GM12878 (cell line): ENCODE measurements at regions of chr3 and their contacts with region 1.

Region 1: GRCh38 chr3:58217209-58217811 is 6.5 kb upstream of the DNASE1L3 start:
- DNase-seq: no peak
- ATAC-seq: peak; percentile 59
- H3K4me3 ChIP-seq: no peak overlapping the region
- H3K27ac ChIP-seq: no peak overlapping the region
- H3K4me1 ChIP-seq: peaks cover 56% of the 10 kb centered on the region
- H3K27me3 ChIP-seq: no peaks in the 10 kb centered on the region
- CTCF ChIP-seq: peak; percentile 84 to 94 (median 89)
- EP300 ChIP-seq: 0 out of 4 replicates have a peak, but pooled peaks of 1 of the 2 experiments have one; percentile 19
- POLR2A ChIP-seq: no peak
- RAD21 ChIP-seq: peak; percentile 74

Region 2: DNA sequence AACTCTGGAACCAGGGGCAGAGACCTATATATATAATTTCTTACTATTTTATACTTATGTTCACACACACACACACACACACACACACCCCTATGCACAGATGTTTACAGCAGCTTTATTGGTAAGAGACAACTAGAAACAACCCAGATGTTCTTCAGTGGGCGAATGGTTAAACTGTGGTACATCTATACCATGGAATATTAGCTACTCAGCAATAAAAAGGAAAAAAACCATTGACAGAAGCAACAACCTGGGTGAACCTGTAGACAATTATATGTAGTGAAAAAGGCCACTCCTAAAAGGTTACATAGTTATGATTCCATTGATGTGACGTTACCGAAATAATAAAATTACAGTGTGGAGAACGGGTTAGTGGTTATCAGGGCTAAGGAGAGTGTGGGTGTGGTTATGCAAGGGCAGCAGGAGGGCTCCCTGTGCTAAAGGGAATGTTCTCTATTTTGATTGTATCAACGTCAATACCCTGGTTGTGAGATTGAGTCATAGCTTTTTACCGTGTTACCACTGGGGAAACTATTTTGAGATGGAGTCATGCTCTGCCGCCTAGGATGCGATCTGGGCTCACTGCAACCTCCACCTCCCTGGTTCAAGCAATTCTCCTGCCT is 123.6 kb before region 1 on chr3:
- CTCF ChIA-PET with region 1: no interaction called
- POLR2A ChIA-PET with region 1: no interaction called
- RAD21 ChIA-PET with region 1: no interaction called
- SMC1A ChIA-PET with region 1: no interaction called
- in situ Hi-C with region 1: no loop called
- intact Hi-C with region 1: no loop called
- DNase-seq: no peak
- ATAC-seq: no peak
- H3K4me3 ChIP-seq: no peak overlapping the region
- H3K27ac ChIP-seq: no peak overlapping the region
- H3K4me1 ChIP-seq: no peaks in the 10 kb centered on the region
- H3K27me3 ChIP-seq: no peaks in the 10 kb centered on the region
- CTCF ChIP-seq: no peak
- EP300 ChIP-seq: no peak
- POLR2A ChIP-seq: no peak
- RAD21 ChIP-seq: no peak

Region 3: DNA sequence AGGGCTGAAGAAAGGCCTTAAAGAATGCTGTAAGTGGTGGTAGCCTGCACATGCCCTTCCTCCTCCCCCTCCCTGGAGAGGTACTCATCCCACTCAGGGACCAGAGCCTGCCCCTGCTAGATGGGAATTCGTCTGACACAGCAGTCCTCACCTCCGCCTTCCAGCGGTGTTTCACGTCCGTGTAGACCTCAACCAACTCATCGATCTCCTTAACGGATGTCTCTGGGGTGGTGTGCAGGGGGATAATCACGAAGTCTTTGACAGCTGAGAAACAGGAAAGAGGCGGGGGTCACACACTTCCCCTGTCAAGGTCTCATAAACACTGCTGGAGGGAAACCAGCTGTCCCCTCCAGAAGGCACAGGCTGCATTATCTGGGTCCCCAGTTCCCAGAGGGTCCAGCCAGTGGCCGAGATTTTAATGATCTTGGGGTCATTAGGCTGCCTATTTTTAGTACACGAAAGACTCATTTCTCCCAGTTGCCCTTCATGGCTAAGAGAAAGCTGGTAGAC is 16.4 kb before region 1 on chr3:
- CTCF ChIA-PET with region 1: interaction called, 655 read pairs
- POLR2A ChIA-PET with region 1: interaction called, 491 read pairs
- RAD21 ChIA-PET with region 1: interaction called, 285 read pairs
- SMC1A ChIA-PET with region 1: interaction called, 510 read pairs
- in situ Hi-C with region 1: no loop called
- intact Hi-C with region 1: loop called (anchors 1 kb)
- DNase-seq: no peak
- ATAC-seq: peak; percentile 53
- H3K4me3 ChIP-seq: no peak overlapping the region; the same call in 1 of the 2 replicates
- H3K27ac ChIP-seq: peak overlapping the region; percentile 73
- H3K4me1 ChIP-seq: peaks cover 46% of the 10 kb centered on the region
- H3K27me3 ChIP-seq: no peaks in the 10 kb centered on the region
- CTCF ChIP-seq: no peak
- EP300 ChIP-seq: no peak
- POLR2A ChIP-seq: 0 out of 2 replicates have a peak, but pooled peaks have one; percentile 25
- RAD21 ChIP-seq: no peak

Region 4: DNA sequence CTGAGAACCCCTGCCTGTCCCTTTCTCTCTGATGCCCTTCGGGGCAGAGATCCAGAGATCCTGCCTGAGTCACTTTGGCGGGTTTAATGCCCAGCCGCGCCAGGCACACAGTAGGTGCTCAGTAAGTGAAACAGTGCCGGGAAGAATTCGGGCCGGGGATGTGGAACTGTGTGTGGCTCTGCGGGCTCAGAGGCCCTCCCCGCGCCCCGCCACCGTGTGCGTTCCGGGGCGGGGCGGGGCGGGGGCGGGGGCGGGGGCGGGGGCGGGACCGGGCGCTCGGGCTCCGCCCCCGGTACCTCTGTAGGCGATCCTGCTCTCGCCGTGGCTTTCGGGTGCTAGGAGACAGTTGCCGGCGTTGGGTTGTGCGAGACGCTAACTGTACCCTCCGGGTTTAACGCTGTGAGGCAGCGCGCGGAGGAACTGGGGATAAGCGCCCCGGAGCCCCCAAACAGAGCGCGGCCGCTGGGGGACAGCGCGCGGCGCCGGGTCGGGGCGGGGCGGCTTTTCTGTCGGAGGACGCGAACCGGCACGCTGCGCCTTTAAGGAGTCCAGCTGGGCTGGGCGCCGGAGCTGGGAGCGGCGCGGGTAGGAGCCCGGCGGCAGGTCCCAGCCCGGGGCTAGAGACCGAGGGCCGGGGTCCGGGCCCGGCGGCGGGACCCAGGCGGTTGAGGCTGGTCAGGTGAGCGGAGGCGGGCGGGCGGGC is 20.1 kb after region 1 on chr3 and contains the start of gene ABHD6:
- CTCF ChIA-PET with region 1: interaction called, 110 read pairs
- POLR2A ChIA-PET with region 1: interaction called, 166 read pairs
- RAD21 ChIA-PET with region 1: interaction called, 92 read pairs
- SMC1A ChIA-PET with region 1: interaction called, 228 read pairs
- in situ Hi-C with region 1: no loop called
- intact Hi-C with region 1: loop called (anchors 2 kb)
- DNase-seq: no peak
- ATAC-seq: peak; percentile 79
- H3K4me3 ChIP-seq: peak within 1 kb of the TSS; percentile 68
- H3K27ac ChIP-seq: peak within 1 kb of the TSS; percentile 44
- H3K4me1 ChIP-seq: peaks cover 13% of the 10 kb centered on the region
- H3K27me3 ChIP-seq: no peaks in the 10 kb centered on the region
- CTCF ChIP-seq: peak; percentile 33 to 58 (median 37); a peak in 5 of 6 replicates
- EP300 ChIP-seq: no peak
- POLR2A ChIP-seq: peak; percentile 48
- RAD21 ChIP-seq: peak; percentile 61
- polyA plus RNA-seq, gene ABHD6: 1.4 to 1.5 TPM

Region 5: DNA sequence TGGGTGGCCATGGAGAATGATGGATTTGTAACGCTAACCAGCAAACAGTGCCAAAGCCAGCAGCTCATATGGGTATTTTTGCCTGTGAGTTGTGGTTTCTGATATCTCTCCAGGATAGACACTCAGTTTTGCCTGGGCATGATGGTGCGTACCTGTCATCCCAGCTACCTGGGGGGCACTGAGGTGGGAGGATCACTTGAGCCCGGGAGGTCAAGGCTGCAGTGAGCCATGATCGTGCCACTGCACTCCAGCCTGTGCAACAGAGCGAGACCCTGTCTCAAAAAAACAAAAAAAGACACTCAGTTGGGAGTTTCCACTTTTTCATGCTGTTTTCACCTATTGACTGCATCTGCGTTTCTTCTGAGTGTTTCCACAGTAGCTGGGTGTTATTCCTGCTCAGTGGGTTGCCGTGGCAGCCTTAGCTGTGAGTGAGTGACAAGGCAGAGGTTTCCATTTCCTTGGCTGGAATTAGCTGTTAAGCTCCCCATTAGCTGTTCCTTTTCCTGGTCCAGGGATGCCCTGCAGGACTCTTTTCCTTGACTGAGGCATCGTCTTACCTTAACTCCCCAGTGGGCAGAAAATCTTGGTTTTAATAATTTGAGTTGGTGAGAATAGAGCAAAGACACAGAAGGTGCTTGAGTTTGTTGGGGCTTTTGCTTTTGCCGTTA is 74.5 kb after region 1 on chr3:
- CTCF ChIA-PET with region 1: interaction called, 8 read pairs
- POLR2A ChIA-PET with region 1: no interaction called
- RAD21 ChIA-PET with region 1: interaction called, 6 read pairs
- SMC1A ChIA-PET with region 1: interaction called, 10 read pairs
- in situ Hi-C with region 1: no loop called
- intact Hi-C with region 1: no loop called
- DNase-seq: no peak
- ATAC-seq: peak; percentile 40
- H3K4me3 ChIP-seq: no peak overlapping the region
- H3K27ac ChIP-seq: no peak overlapping the region
- H3K4me1 ChIP-seq: no peaks in the 10 kb centered on the region
- H3K27me3 ChIP-seq: no peaks in the 10 kb centered on the region
- CTCF ChIP-seq: no peak
- EP300 ChIP-seq: no peak
- POLR2A ChIP-seq: no peak
- RAD21 ChIP-seq: no peak

Region 6: DNA sequence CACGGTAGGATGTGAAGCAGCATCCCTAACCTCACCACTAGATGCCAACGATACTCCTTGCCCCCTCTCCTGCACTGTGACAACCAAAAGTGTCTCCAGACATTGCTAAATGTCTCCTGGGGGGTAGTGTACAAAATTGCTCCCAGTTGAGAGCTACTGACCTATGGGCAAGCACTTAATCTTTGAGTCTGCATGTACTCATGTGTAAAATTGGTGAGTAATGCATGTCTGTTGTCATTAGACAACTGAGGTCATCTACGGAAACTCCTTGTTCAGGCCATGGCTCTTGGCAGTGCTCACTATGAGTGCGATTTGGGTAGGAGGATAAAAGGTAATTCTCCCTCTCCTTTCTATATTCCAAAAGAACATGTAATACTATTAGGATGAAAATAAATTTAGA is 187.1 kb after region 1 on chr3:
- CTCF ChIA-PET with region 1: no interaction called
- POLR2A ChIA-PET with region 1: no interaction called
- RAD21 ChIA-PET with region 1: no interaction called
- SMC1A ChIA-PET with region 1: no interaction called
- in situ Hi-C with region 1: no loop called
- intact Hi-C with region 1: no loop called
- DNase-seq: no peak
- ATAC-seq: no peak
- H3K4me3 ChIP-seq: no peak overlapping the region
- H3K27ac ChIP-seq: no peak overlapping the region
- H3K4me1 ChIP-seq: peaks cover 4% of the 10 kb centered on the region; the same call in 1 of the 2 replicates
- H3K27me3 ChIP-seq: no peaks in the 10 kb centered on the region
- CTCF ChIP-seq: no peak
- EP300 ChIP-seq: no peak
- POLR2A ChIP-seq: no peak
- RAD21 ChIP-seq: no peak

Region 7: DNA sequence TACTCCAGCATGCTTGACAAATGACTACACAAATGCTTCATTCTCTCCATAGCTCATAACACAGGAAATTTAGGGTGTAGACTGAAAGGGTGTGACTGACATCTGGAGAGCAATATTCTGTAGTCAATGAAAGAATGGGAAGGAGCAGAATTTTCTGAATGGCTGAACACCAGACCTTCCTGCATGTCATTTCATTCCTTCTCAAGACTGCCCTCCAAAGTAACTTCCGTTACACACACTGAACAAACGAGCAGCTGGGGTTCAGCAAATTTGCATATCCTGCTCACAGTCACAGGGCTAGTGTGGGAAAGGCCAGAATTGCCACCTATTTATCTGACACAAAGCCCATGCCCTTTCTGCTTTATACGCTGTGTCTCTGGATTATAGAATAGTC is 1157.5 kb after region 1 on chr3:
- CTCF ChIA-PET with region 1: no interaction called
- POLR2A ChIA-PET with region 1: no interaction called
- RAD21 ChIA-PET with region 1: no interaction called
- SMC1A ChIA-PET with region 1: no interaction called
- in situ Hi-C with region 1: loop called (anchors 25 kb)
- intact Hi-C with region 1: no loop called
- DNase-seq: peak; percentile 91
- ATAC-seq: peak; percentile 99
- H3K4me3 ChIP-seq: no peak overlapping the region
- H3K27ac ChIP-seq: no peak overlapping the region
- H3K4me1 ChIP-seq: peaks cover 9% of the 10 kb centered on the region
- H3K27me3 ChIP-seq: no peaks in the 10 kb centered on the region
- CTCF ChIP-seq: no peak; a peak in 1 of 6 replicates
- EP300 ChIP-seq: 0 out of 4 replicates have a peak, but pooled peaks of 1 of the 2 experiments have one; percentile 57
- POLR2A ChIP-seq: no peak
- RAD21 ChIP-seq: peak; percentile 31; the same call in 1 of the 2 replicates